Mammary epithelial cell (primary cell): ENCODE measurements at regions of chr19 and their contacts with region 1.

Region 1: DNA sequence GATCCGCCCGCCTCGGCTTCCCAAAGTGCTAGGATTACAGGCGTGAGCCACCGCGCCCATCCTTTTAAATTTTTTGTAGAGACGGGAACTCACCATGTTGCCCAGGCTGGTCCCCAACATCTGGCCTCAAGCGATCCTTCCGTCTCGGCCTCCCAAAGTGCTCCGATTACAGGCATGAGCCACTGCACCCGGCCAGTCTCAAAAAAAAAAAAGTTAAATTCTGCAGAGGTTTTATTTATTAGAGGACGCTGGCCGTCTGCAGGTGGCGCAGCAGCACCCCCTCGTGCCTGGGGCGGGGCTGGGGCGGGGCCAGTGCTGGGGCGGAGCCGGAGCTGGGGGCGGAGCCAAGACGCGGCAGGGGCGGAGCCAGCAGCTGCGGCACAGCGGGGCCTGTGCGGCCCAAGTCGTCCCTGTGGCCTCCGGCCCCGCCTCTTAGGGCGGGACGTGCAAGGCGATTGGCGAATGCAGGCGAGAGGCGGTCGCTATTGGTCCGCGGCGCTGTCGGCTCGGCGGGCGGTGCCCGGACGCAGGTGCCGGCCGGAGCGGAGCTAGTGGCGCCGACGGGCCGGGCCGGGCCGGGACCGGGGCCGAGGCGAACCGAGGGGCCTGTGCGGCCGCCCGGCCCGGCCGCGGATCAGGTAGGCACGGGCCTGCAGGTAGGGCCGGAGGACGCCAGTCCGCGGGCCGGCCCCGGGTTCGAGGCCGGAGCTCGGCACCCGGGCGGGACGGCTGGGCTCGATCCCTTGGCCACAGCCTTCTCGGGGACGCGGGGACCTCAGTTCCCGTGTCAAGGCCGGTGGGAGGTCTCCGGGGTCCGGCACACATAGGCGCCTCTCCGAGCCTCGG is at the start of gene MARCHF2:
- DNase-seq: peak; percentile 94
- H3K4me3 ChIP-seq: peak within 1 kb of the TSS; percentile 74 to 80 (median 80)
- H3K27ac ChIP-seq: no peak within 1 kb of the TSS
- H3K4me1 ChIP-seq: peaks cover 5% of the 10 kb centered on the region
- H3K27me3 ChIP-seq: no peaks in the 10 kb centered on the region
- CTCF ChIP-seq: peak; percentile 37 to 62
- total RNA-seq, gene MARCHF2: 21.9 to 48.3 TPM

Region 2: DNA sequence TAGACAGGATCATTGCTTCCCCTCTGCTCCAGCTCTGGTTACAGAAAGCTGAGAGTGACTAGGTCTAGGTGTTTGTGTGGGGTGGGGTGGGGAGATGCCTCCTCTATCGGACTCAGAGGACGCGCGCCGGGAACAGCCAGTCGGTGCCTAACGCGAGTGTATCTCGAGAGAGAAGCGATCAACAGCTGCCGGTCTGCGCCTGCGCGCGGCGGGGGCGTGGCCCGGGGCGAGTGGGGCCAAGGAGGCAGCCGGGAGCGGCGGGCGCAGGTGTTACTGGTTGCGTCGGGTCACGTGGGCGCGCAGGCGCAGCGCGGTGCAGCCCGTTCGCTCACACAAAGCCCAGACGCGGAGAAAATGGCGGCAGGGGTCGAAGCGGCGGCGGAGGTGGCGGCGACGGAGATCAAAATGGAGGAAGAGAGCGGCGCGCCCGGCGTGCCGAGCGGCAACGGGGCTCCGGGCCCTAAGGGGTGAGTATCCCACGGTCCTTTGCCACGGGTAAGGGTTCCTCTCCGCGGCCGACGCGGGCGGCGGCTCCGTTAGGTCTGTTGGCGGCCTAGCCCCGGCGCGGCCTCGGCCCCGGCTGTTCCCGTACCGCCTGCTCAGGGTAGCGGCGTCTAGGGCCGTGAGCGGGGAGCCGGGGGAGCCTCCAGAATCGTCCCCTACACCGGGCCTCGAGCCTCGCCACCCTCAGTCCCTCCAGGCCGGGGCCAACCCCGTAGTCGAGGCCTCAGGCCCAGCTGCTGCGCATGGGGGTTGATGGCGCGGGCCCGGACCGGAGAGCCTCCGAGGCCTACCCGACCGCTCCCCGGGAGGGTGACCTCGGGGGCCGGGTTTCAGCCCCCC is 31.9 kb after region 1 on chr19 and contains the start of gene HNRNPM:
- CTCF ChIA-PET with region 1: interaction called, 19 read pairs
- dilution Hi-C with region 1: no loop called
- in situ Hi-C with region 1: no loop called
- intact Hi-C with region 1: loop called (anchors 1 kb)
- DNase-seq: peak; percentile 98
- H3K4me3 ChIP-seq: peak within 1 kb of the TSS; percentile 92 to 96 (median 95)
- H3K27ac ChIP-seq: peak within 1 kb of the TSS; percentile 82
- H3K4me1 ChIP-seq: peaks cover 8% of the 10 kb centered on the region
- H3K27me3 ChIP-seq: no peaks in the 10 kb centered on the region
- CTCF ChIP-seq: no peak
- total RNA-seq, gene HNRNPM: 29.2 to 164 TPM

Region 3: GRCh38 chr19:8473648-8474476 is 60.9 kb after region 1 on chr19:
- CTCF ChIA-PET with region 1: no interaction called
- dilution Hi-C with region 1: no loop called
- in situ Hi-C with region 1: no loop called
- intact Hi-C with region 1: no loop called
- DNase-seq: no peak
- H3K4me3 ChIP-seq: no peak overlapping the region
- H3K27ac ChIP-seq: no peak overlapping the region
- H3K4me1 ChIP-seq: no peaks in the 10 kb centered on the region
- H3K27me3 ChIP-seq: no peaks in the 10 kb centered on the region
- CTCF ChIP-seq: no peak

Region 4: DNA sequence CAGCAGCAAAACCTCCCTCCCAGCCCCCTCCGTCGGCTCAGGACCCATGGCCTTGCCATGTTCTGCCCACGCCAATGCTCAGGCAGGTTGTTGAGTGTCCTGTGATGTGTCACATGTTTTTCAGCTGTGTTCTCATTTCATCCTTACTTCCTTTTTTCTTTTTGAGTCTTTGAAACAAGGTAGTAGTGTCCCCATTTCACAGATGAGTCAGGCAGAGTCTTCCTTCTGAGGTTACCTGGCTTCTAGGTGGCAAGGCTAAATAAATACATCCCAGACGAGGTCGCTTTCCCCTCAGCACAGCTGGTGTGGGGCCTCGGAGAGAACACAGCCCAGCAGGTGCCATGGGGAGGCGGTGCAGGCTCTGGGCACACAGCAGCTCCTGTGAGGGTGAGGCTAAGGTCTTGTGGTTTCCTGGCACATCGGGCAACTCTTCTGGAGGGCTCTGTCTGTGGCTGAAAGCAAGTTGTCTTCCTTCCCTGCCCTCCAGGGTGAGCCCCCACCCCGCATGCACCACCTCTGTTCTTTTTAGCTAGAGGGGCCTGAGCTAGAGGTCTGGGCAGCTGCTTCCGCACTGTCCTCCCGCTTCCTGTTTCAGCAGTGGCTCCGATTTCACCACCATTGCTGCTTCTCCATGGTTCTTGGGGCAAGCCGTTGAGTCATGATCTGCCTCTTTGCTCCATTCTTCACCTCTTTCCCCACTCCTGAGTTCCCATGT is 74.3 kb after region 1 on chr19:
- CTCF ChIA-PET with region 1: no interaction called
- dilution Hi-C with region 1: no loop called
- in situ Hi-C with region 1: no loop called
- intact Hi-C with region 1: loop called (anchors 5 kb)
- DNase-seq: no peak
- H3K4me3 ChIP-seq: no peak overlapping the region
- H3K27ac ChIP-seq: no peak overlapping the region
- H3K4me1 ChIP-seq: peaks cover 20% of the 10 kb centered on the region
- H3K27me3 ChIP-seq: no peaks in the 10 kb centered on the region
- CTCF ChIP-seq: no peak

Region 5: GRCh38 chr19:8505680-8506401 is 92.8 kb after region 1 on chr19:
- CTCF ChIA-PET with region 1: interaction called, 3 read pairs
- dilution Hi-C with region 1: no loop called
- in situ Hi-C with region 1: no loop called
- intact Hi-C with region 1: loop called (anchors 1 kb)
- DNase-seq: peak; percentile 52
- H3K4me3 ChIP-seq: peak overlapping the region; percentile 57 to 72 (median 57)
- H3K27ac ChIP-seq: no peak overlapping the region
- H3K4me1 ChIP-seq: peaks cover 9% of the 10 kb centered on the region
- H3K27me3 ChIP-seq: no peaks in the 10 kb centered on the region
- CTCF ChIP-seq: peak; percentile 55 to 88

Region 6: DNA sequence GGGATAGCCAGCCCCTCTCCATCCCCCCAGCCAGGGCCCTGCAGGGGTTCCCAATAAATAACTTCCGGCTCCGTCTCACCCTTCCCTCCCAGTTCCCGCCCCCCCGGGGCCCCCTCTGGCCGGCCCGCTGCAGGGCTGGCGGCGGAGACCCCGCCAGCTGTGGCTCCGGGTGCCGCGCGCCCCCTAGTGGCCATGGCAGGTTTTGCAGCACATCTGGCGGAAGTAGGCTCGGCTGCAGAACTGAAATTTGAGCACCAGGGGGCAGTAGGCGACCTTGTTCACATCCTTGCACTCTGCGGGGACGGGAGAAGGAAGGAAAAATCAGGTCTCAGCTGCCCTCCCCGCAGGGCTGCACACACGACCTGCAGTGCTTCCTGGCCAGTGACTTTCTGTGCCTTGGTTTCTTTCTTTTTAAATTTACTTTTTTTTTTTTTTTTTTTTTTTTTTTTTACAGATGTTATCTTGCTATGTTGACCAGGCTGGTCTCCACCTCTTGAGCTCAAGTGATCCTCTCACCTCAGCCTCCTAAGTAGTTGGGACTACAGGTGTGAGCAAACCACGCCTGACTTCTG is 167.8 kb after region 1 on chr19:
- CTCF ChIA-PET with region 1: interaction called, 4 read pairs
- dilution Hi-C with region 1: no loop called
- in situ Hi-C with region 1: no loop called
- intact Hi-C with region 1: loop called (anchors 5 kb)
- DNase-seq: peak; percentile 42
- H3K4me3 ChIP-seq: no peak overlapping the region
- H3K27ac ChIP-seq: no peak overlapping the region
- H3K4me1 ChIP-seq: no peaks in the 10 kb centered on the region
- H3K27me3 ChIP-seq: no peaks in the 10 kb centered on the region
- CTCF ChIP-seq: peak; percentile 97 to 99